Aorta (tissue), 5 donors: ENCODE measurements at regions of chr17 and their contacts with region 1.

Region 1: GRCh38 chr17:18099516-18099915 is 9.0 kb upstream of the MYO15A start:
- DNase-seq: no peak
- ATAC-seq: no peak
- H3K4me3 ChIP-seq: no peak overlapping the region
- H3K27ac ChIP-seq: no peak overlapping the region
- H3K4me1 ChIP-seq: no peaks in the 10 kb centered on the region
- H3K27me3 ChIP-seq: no peaks in the 10 kb centered on the region

Region 2: GRCh38 chr17:17783116-17783824 is 316.2 kb before region 1 on chr17:
- intact Hi-C with region 1: loop called in 1 of 2 experiments (anchors 5 kb)
- DNase-seq: peak in 1 of 2 donors; percentile 85
- ATAC-seq: peak; percentile 17
- H3K4me3 ChIP-seq: peak overlapping the region; percentile 9 to 52
- H3K27ac ChIP-seq: no peak overlapping the region
- H3K4me1 ChIP-seq: no peaks in the 10 kb centered on the region
- H3K27me3 ChIP-seq: no peaks in the 10 kb centered on the region

Region 3: GRCh38 chr17:18025945-18026776 is 73.4 kb before region 1 on chr17:
- intact Hi-C with region 1: no loop called
- DNase-seq: no peak
- ATAC-seq: no peak
- H3K4me3 ChIP-seq: no peak overlapping the region
- H3K27ac ChIP-seq: no peak overlapping the region
- H3K4me1 ChIP-seq: no peaks in the 10 kb centered on the region
- H3K27me3 ChIP-seq: no peaks in the 10 kb centered on the region